CD8-positive, alpha-beta T cell (primary cell): ENCODE measurements at regions of chr20 and their contacts with region 1.

Region 1: DNA sequence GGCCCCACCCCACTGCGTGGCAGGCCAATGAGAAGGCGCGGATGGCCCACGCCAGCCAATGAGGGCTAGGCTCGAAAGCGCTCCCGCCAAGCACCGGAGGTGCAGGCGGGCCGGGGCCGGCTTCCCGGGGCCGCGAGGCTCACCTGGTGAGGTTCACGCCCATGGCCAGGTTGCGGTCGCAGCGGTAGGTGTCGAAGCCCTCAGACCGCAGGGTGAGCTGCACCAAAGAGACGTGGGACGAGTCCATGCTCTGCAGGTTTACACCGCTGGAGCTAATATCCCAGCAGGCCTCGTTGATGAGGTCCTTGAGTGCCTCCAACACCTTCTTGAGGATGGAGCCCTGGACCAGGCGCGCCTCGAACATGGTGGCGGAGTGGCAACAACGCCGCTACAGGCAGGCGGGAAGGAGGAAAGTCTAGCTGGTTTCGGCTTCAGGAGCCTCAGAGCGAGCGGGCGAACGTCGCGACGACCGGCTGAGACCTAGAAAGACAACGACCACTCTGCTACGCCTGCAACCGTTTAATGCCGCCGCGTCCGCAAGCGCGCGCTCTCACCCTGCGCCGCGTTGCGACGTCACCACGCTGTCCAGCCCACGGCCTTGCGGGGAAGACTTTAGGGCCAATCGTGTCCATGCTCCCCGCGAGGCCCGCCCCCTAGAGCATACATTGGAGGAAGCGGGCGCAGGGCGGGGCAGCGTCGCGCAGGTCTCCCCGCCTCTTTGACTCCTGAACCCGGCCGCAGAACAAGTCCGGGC is at the start of gene PCNA:
- DNase-seq: peak; percentile 89 to 98 (median 95)
- ATAC-seq: peak; percentile 94
- H3K4me3 ChIP-seq: peak within 1 kb of the TSS; percentile 89 to 95
- H3K4me3 Mint-ChIP-seq: peak within 1 kb of the TSS; percentile 95
- H3K27ac ChIP-seq: peak within 1 kb of the TSS; percentile 84 to 86
- H3K27ac Mint-ChIP-seq: peak within 1 kb of the TSS; percentile 97
- H3K4me1 ChIP-seq: peaks cover 20% of the 10 kb centered on the region
- H3K4me1 Mint-ChIP-seq: peaks cover 30% of the 10 kb centered on the region
- H3K27me3 ChIP-seq: no peaks in the 10 kb centered on the region
- H3K27me3 Mint-ChIP-seq: no peaks in the 10 kb centered on the region
- CTCF ChIP-seq: no peak
- total RNA-seq, gene PCNA: 40.2 to 40.6 TPM

Region 2: DNA sequence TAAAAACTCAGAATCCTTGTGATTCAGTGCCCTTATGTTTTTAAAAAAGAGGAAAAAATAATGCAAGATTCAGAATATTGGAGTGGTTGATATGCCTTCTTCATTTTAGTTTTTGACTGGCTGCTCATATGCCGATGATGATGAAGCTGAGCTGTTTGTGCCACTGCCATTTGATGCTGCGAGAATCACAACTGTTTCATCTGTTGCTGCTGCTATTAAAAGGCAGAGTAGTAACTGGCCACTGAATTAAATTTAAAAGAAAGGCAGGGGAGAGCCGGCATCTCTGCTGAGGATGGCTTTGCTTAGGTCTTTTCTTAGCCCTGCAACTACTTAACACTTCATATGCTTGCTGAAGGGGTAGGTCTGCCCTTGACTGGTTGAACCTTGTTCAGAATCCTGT is 40.3 kb after region 1 on chr20:
- CTCF ChIA-PET with region 1: interaction called, 3 read pairs
- POLR2A ChIA-PET with region 1: no interaction called
- intact Hi-C with region 1: loop called in 1 of 2 experiments (anchors 1 kb)
- DNase-seq: no peak
- ATAC-seq: no peak
- H3K4me3 ChIP-seq: no peak overlapping the region
- H3K4me3 Mint-ChIP-seq: no peak overlapping the region
- H3K27ac ChIP-seq: no peak overlapping the region
- H3K27ac Mint-ChIP-seq: peak overlapping the region; percentile 1
- H3K4me1 ChIP-seq: peaks cover 8% of the 10 kb centered on the region
- H3K4me1 Mint-ChIP-seq: peaks cover 63% of the 10 kb centered on the region
- H3K27me3 ChIP-seq: no peaks in the 10 kb centered on the region
- H3K27me3 Mint-ChIP-seq: no peaks in the 10 kb centered on the region
- CTCF ChIP-seq: no peak

Region 3: DNA sequence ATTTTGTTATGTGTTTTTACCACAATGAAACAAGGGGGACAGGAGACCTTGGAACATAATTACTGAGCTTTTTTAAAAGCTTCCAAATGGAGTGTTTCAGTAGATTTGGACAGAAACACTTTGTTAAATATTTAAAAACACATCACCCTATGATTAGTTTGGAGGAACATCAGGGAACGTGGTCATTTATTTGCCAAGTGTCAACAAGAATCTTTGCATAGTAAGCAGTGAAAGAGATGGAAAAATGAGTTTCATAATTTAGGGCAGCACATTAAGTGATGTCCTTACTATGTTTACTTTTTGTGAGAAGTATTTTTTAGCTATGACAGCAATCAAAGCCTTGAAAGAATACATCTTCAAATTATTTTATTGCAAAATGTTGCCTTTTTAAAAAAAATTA is 114.5 kb after region 1 on chr20:
- CTCF ChIA-PET with region 1: no interaction called
- POLR2A ChIA-PET with region 1: no interaction called
- intact Hi-C with region 1: no loop called
- DNase-seq: no peak
- ATAC-seq: no peak
- H3K4me3 ChIP-seq: no peak overlapping the region
- H3K4me3 Mint-ChIP-seq: no peak overlapping the region
- H3K27ac ChIP-seq: no peak overlapping the region
- H3K27ac Mint-ChIP-seq: no peak overlapping the region
- H3K4me1 ChIP-seq: no peaks in the 10 kb centered on the region
- H3K4me1 Mint-ChIP-seq: no peaks in the 10 kb centered on the region
- H3K27me3 ChIP-seq: no peaks in the 10 kb centered on the region
- H3K27me3 Mint-ChIP-seq: peaks cover 44% of the 10 kb centered on the region
- CTCF ChIP-seq: no peak